Colonic mucosa (tissue), 4 donors: ENCODE measurements at regions of chr10 and their contacts with region 1.

Region 1: DNA sequence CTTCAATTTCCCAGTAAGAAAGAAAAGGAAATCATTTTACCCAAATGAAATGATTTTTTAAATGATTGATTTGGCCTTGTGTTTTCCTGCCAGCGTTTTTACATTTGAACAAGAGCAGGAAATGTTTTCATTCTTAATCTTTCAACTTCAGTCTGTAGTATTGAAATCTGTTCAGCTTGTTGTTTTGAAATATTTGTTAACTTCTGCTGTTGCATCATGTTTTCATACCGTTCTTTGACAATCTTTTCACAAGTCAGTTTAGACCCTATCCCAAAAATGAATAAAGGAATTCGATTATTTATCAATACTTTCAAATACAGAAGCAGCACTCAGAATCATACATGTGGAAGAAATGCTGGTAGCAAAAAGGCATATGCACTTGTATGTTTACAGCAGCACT is 8.1 kb downstream of the SFR1 start:
- DNase-seq: no peak
- H3K4me3 ChIP-seq: no peak overlapping the region
- H3K27ac ChIP-seq: no peak overlapping the region
- H3K4me1 ChIP-seq: no peaks in the 10 kb centered on the region
- H3K27me3 ChIP-seq: no peaks in the 10 kb centered on the region
- CTCF ChIP-seq: no peak

Region 2: GRCh38 chr10:103986360-103986759 is 143.7 kb before region 1 on chr10:
- intact Hi-C with region 1: loop called (anchors 5 kb)
- DNase-seq: no peak
- H3K4me3 ChIP-seq: no peak overlapping the region
- H3K27ac ChIP-seq: no peak overlapping the region
- H3K4me1 ChIP-seq: no peaks in the 10 kb centered on the region
- H3K27me3 ChIP-seq: no peaks in the 10 kb centered on the region
- CTCF ChIP-seq: no peak